Ascending aorta (tissue), 2 donors: ENCODE measurements at regions of chr10 and their contacts with region 1.

Region 1: GRCh38 chr10:103396064-103396788 is at the starts of genes ATP5MK and PDCD11:
- DNase-seq: peak; percentile 92 to 99
- H3K4me3 ChIP-seq: peak within 1 kb of the TSS; percentile 79 to 99
- H3K27ac ChIP-seq: peak within 1 kb of the TSS; percentile 81 to 82
- H3K4me1 ChIP-seq: peaks cover 10 to 25% of the 10 kb centered on the region in 2 donors
- H3K27me3 ChIP-seq: no peaks in the 10 kb centered on the region
- CTCF ChIP-seq: peak in 1 of 3 experiments; percentile 11
- total RNA-seq, gene ATP5MK: 481 TPM
- total RNA-seq, gene PDCD11: 4.8 TPM

Region 2: DNA sequence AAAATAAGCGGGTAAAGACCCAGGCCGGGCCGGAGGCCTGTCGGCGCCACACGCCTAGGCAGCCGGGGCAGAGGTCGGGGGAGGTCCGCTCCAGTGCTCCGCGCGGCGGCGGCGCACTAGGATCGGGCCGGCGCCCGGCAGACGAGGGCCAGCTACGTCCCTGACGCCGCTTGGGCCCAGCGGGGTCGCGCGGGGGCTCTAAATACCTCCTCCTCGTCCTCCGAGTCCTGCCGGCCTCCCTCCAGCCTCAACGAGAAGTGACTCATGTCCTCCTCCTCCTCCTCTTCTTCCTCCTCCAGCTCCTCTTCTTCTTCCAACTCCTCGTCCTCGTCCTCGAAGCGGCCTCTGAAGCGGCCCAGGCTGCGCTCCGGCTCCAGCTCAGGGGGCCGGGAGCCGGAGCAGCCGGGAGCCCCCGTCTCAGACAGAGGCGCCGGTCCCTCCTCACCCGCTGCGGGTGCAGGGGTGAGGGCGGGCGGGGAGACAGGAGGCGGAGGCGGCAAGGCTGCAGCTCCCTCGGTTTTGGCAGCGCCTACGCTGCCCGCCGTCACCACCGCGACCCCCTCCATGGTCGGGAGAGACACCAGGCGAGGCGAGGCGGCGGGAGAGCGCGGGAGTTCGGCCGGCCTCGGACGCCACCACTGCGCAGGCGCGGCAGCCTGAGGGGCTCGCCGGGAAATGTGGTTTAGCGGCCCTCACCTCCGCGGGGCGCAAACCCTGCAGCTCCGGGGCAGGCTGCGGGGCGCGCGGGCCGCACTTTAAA is 45.5 kb before region 1 on chr10 and contains the start of gene PCGF6:
- intact Hi-C with region 1: loop called (anchors 1 kb)
- DNase-seq: peak in 1 of 2 donors; percentile 84
- H3K4me3 ChIP-seq: peak within 1 kb of the TSS; percentile 77 to 95
- H3K27ac ChIP-seq: peak within 1 kb of the TSS; percentile 80 to 84
- H3K4me1 ChIP-seq: peaks cover 0 to 6% of the 10 kb centered on the region in 2 donors
- H3K27me3 ChIP-seq: no peaks in the 10 kb centered on the region
- CTCF ChIP-seq: no peak
- total RNA-seq, gene PCGF6: 9.7 TPM

Region 3: DNA sequence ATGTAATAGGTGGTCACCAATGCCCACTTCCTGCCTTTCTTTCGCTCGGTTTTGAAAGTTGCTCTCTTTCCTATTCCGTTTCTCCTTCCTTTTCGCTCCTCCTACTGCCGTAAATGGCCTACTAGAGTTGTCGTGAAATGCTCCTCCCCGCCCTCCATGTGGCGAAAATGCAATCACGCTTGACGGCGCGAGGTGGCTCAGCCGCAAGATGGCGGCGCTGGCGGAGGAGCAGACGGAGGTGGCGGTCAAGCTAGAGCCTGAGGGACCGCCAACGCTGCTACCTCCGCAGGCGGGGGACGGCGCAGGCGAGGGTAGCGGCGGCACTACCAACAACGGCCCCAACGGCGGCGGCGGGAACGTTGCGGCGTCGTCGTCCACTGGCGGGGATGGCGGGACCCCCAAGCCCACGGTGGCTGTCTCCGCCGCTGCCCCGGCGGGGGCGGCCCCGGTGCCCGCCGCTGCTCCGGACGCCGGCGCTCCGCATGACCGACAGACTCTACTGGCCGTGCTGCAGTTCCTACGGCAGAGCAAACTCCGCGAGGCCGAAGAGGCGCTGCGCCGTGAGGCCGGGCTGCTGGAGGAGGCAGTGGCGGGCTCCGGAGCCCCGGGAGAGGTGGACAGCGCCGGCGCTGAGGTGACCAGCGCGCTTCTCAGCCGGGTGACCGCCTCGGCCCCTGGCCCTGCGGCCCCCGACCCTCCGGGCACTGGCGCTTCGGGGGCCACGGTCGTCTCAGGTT is 28.3 kb before region 1 on chr10 and contains the start of gene TAF5:
- intact Hi-C with region 1: loop called (anchors 1 kb)
- DNase-seq: peak; percentile 64 to 96
- H3K4me3 ChIP-seq: peak within 1 kb of the TSS; percentile 83 to 99
- H3K27ac ChIP-seq: peak within 1 kb of the TSS; percentile 78 to 91
- H3K4me1 ChIP-seq: peaks cover 0 to 11% of the 10 kb centered on the region in 2 donors
- H3K27me3 ChIP-seq: no peaks in the 10 kb centered on the region
- CTCF ChIP-seq: peak in 1 of 3 experiments; percentile 10
- total RNA-seq, gene TAF5: 2.4 TPM

Region 4: DNA sequence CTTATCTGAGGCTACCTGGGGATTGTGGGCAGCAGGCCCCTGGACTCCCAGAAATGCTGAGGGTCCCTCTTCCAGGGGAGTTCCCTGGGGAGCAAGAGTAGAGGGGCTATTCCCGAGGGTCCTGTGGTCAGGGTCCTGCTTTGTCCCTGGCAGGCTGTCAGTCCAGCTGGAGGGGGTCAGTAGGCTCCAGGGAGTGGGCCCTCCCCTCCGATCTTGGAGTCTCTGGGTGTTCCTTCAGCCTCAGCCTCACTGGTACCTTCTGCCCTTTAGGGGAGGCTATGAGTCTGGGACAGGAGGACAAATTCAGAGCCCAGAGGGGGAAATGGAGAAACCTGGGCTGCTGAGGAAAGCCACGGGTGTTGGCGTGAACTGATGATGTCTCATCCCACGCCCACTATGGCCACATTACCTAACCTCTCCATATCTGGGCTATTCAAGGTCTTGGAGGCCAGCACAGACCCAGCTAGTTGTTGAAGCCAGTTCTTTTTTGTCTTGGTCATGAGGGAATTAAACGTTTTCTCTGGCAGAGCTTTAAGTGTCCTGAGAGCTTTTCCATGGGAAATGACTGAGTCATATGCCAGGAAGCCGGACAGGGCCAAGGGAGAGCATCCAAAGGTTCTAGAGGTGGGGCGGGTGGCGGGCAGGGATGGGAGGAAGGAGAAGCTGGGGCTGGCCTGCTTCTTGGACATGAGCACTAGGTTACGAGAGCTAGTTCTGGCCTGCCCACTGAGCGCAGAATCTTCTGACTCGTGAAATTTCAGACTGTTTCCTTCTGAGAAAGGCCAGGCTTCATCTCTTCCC is 49.7 kb after region 1 on chr10:
- intact Hi-C with region 1: loop called (anchors 2 kb)
- DNase-seq: peak; percentile 49 to 95
- H3K4me3 ChIP-seq: no peak overlapping the region
- H3K27ac ChIP-seq: peak overlapping the region; percentile 90 to 95
- H3K4me1 ChIP-seq: peaks cover 36 to 54% of the 10 kb centered on the region in 2 donors
- H3K27me3 ChIP-seq: no peaks in the 10 kb centered on the region
- CTCF ChIP-seq: no peak

Region 5: DNA sequence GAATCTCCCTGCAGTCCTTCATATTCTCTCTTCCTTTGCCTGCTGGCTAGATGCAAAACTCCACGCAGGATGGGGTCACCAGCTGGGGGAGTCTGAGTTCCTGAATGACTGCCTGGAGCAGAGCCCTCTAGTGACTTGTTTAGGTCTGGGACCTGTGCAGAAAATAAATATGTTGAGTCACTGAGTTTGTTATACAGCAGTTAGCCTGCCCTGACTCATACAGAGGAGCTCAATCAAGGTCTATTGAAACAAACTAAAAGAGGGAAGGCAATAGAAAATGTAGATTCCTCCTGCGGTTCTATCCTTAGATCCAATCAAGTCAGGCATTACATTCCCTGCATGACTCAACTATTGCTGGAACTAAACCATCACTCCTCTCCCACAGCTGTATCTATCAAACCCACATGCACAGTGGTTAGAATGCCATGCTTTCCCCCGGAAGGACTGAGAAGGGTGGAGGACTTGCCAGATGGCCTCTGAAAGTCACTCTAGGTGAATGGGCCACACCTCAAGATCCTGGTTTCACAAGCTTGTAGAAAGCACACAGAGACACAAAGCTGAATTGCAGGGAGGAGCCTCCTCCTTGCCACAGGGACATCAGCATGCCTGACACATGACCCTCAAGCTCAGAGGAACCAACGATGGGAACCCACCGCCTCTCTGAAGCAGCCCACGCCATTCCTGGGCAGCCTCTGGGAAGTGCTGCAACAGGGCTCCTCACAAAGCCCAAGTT is 385.3 kb after region 1 on chr10:
- intact Hi-C with region 1: no loop called
- DNase-seq: no peak
- H3K4me3 ChIP-seq: no peak overlapping the region
- H3K27ac ChIP-seq: no peak overlapping the region
- H3K4me1 ChIP-seq: peaks cover 4 to 29% of the 10 kb centered on the region in 2 donors
- H3K27me3 ChIP-seq: no peaks in the 10 kb centered on the region
- CTCF ChIP-seq: no peak